ENCODE measurements at regions of chr12 and their contacts with region 1.

Region 1: GRCh38 chr12:118135788-118136558 is at the start of gene PEBP1:
- DNase-seq: peak; percentile 96
- ATAC-seq: peak; percentile 99
- H3K4me3 ChIP-seq: peak within 1 kb of the TSS; percentile 95
- H3K27ac ChIP-seq: peak within 1 kb of the TSS; percentile 90 to 96
- H3K4me1 ChIP-seq: peaks cover 25% of the 10 kb centered on the region
- CTCF ChIP-seq: no peak
- EP300 ChIP-seq: no peak
- POLR2A ChIP-seq: peak; percentile 87
- RAD21 ChIP-seq: no peak
- polyA plus RNA-seq, gene PEBP1: 152 and 169 TPM in 2 replicates

Region 2: DNA sequence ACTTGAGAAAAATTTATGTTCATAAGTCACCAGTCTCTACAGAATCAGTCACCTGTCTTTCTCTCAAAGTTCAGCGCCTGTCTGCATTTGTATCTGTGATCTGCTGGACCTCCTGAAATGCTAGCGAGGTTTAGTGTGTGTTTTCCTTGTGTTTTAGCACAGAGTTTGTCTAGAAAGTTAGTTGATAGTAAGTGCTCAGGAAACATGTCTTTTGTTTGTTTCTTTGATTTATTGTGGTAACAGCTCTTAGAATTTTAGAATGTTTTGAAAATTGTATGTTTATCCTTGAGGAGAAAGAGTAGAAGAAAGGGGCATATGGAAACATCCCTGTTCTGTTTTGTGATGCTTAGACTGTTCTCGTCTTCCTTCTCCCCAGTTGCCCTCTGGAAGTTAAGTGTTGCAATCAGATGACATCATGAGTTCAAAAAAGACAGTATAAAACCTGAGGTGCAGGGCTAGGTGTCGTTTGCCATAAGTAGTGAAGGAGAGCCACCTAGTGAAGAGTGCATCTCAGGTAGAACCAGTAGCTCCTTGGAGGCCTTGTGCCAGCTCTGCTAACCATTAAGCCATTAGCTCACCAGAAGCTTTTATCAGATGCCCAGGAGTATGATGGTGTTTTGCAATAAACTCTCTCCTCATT is 1180.5 kb before region 1 on chr12:
- CTCF ChIA-PET with region 1: no interaction called
- POLR2A ChIA-PET with region 1: no interaction called
- DNase-seq: peak; percentile 25 to 68
- ATAC-seq: peak; percentile 62 to 76; a peak in 4 of 6 replicates
- H3K4me3 ChIP-seq: no peak overlapping the region
- H3K27ac ChIP-seq: no peak overlapping the region
- H3K4me1 ChIP-seq: peaks cover 9% of the 10 kb centered on the region
- CTCF ChIP-seq: peak; percentile 29; the same call in 2 of the 3 replicates
- EP300 ChIP-seq: no peak
- POLR2A ChIP-seq: no peak
- RAD21 ChIP-seq: peak; percentile 38 to 42; a peak in 4 of 5 replicates

Region 3: DNA sequence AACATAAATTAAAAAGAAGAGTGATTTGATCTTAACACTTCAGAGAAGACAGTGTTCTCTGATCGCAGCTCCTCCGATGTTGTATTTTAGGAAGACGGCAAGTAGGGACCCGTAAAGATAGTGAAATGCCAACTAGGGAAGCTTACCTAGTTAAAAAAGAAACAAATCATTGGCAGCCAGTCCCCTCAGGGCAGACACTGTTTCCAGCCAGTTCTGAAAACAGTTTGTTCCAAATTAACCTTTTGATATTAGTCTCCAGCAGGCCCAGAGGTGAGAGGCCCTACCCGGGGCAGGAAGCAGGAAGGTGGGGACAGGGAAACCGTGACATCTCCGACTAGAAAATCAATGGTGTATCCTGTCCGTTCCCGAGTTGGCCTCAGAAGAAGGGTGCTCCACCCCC is 223.2 kb before region 1 on chr12:
- CTCF ChIA-PET with region 1: no interaction called
- POLR2A ChIA-PET with region 1: no interaction called
- DNase-seq: no peak
- ATAC-seq: no peak
- H3K4me3 ChIP-seq: no peak overlapping the region
- H3K27ac ChIP-seq: no peak overlapping the region
- H3K4me1 ChIP-seq: no peaks in the 10 kb centered on the region
- CTCF ChIP-seq: no peak
- EP300 ChIP-seq: no peak
- POLR2A ChIP-seq: no peak
- RAD21 ChIP-seq: no peak

Region 4: GRCh38 chr12:118061011-118061875 is 74.7 kb before region 1 on chr12 and contains the start of gene WSB2:
- CTCF ChIA-PET with region 1: interaction called, 4 read pairs
- POLR2A ChIA-PET with region 1: interaction called, 11 read pairs
- DNase-seq: peak; percentile 49 to 56
- ATAC-seq: peak; percentile 41 to 48
- H3K4me3 ChIP-seq: peak within 1 kb of the TSS; percentile 87
- H3K27ac ChIP-seq: peak within 1 kb of the TSS; percentile 98 to 100
- H3K4me1 ChIP-seq: peaks cover 51% of the 10 kb centered on the region
- CTCF ChIP-seq: no peak
- EP300 ChIP-seq: no peak
- POLR2A ChIP-seq: peak; percentile 49
- RAD21 ChIP-seq: no peak
- polyA plus RNA-seq, gene WSB2: 93.5 and 121 TPM in 2 replicates

Region 5: GRCh38 chr12:118120579-118121363 is 15.2 kb before region 1 on chr12:
- CTCF ChIA-PET with region 1: interaction called, 10 read pairs
- POLR2A ChIA-PET with region 1: interaction called, 10 read pairs
- DNase-seq: peak; percentile 69 to 94
- ATAC-seq: peak; percentile 89 to 92
- H3K4me3 ChIP-seq: no peak overlapping the region
- H3K27ac ChIP-seq: peak overlapping the region in 1 of 2 experiments; percentile 55; a peak in 2 of 6 replicates
- H3K4me1 ChIP-seq: peaks cover 13% of the 10 kb centered on the region
- CTCF ChIP-seq: peak; percentile 75
- EP300 ChIP-seq: no peak
- POLR2A ChIP-seq: no peak
- RAD21 ChIP-seq: peak; percentile 60 to 75